PC-9 (cell line): ENCODE measurements at regions of chr13 and their contacts with region 1.

Region 1: DNA sequence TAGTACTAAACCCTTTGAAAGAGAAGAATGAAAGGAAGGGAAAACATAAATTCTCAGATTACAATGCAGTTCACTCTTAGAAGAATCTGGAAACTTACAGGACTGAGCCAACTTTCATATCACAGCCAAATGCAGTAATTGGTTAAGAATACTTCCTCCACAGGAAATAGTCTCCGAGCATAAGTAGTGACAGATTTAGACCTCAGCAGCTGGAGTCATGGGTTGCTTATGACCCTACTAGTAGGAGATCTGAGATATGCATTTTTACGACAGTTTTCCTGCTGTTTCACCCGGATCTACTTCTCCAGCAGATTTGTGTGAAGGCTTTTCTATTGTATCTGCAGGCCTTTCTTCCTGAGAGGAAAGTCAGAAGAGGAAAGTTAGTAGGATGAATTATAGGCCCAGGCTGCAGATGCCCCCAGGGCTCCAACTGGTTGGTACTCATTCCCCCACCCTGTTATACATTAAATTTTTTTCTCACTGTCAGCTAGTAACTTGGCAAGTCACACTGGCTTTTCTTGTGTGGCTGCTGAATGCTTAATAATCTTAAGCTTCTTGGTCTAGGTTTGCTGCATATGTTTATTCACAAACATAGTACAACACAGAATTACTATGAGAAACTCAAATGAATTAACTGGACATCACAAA is 1241.5 kb upstream of the MIR17HG start:
- DNase-seq: no peak
- H3K4me3 ChIP-seq: no peak overlapping the region
- H3K27ac ChIP-seq: no peak overlapping the region
- H3K4me1 ChIP-seq: 0 out of 2 replicates have a peak, but pooled peaks cover 12% of the 10 kb centered on the region
- H3K27me3 ChIP-seq: no peaks in the 10 kb centered on the region
- CTCF ChIP-seq: no peak

Region 2: DNA sequence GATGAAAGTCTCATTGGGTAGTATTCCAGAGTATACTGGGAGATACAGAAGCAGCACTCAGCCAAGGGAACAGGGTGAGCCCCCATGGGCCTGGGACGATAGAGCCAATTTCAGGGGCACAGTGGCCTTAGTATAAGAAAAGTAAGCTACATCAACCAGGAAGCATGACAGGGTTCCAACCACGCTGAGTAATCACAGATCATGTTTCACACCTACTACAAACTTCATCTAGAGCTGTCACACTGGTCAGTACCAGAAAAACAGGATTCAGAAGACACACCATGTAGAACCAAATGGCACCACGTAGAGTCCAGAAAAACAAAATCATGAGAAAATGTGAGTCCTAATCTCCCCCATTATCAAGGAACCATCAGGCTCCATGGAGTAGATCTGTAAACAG is 50.9 kb before region 1 on chr13:
- CTCF ChIA-PET with region 1: no interaction called
- POLR2A ChIA-PET with region 1: no interaction called
- intact Hi-C with region 1: loop called (anchors 1 kb)
- DNase-seq: peak; percentile 39 to 80
- H3K4me3 ChIP-seq: no peak overlapping the region
- H3K27ac ChIP-seq: no peak overlapping the region
- H3K4me1 ChIP-seq: peaks cover 11% of the 10 kb centered on the region
- H3K27me3 ChIP-seq: no peaks in the 10 kb centered on the region
- CTCF ChIP-seq: no peak